ENCODE measurements at regions of chr10 and their contacts with region 1.

Region 1: DNA sequence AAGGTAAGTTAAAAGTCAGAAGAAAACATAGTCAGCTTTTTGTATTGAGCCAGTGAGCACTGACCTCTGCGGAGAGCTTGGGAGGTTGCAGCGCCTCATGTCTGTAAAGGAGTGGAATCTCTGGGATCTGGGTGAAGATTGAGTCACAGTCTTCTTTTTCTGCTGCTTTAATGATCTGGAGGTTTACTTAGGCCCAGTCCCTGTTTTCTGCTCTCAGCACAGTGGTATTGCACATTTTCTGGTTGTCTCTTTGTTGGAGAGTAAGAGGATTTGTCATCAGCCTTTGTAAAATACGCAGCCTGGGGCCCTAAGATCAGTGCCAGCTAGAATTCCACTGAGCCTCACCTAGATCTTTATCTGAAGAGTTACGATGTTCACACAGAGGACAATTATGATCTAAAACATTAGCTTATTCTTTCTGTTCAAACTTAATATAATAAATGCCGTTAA is 58.3 kb upstream of the GJD4 start:
- DNase-seq: peak; percentile 100
- ATAC-seq: peak; percentile 93
- H3K4me3 ChIP-seq: peak overlapping the region; percentile 31
- H3K27ac ChIP-seq: peak overlapping the region; percentile 86
- H3K4me1 ChIP-seq: peaks cover 42% of the 10 kb centered on the region
- H3K27me3 ChIP-seq: no peaks in the 10 kb centered on the region
- CTCF ChIP-seq: peak; percentile 78

Region 2: GRCh38 chr10:35372329-35372728 is 174.5 kb before region 1 on chr10:
- CTCF ChIA-PET with region 1: no interaction called
- POLR2A ChIA-PET with region 1: no interaction called
- intact Hi-C with region 1: loop called (anchors 1 kb)
- DNase-seq: peak; percentile 100
- ATAC-seq: peak; percentile 99
- H3K4me3 ChIP-seq: peak overlapping the region; percentile 8; the same call in 1 of the 2 replicates
- H3K27ac ChIP-seq: peak overlapping the region; percentile 76
- H3K4me1 ChIP-seq: peaks cover 31% of the 10 kb centered on the region
- H3K27me3 ChIP-seq: no peaks in the 10 kb centered on the region
- CTCF ChIP-seq: no peak

Region 3: GRCh38 chr10:35421553-35422178 is 125.2 kb before region 1 on chr10:
- CTCF ChIA-PET with region 1: interaction called, 3 read pairs
- POLR2A ChIA-PET with region 1: interaction called, 5 read pairs
- intact Hi-C with region 1: loop called (anchors 1 kb)
- DNase-seq: peak; percentile 99
- ATAC-seq: peak; percentile 90
- H3K4me3 ChIP-seq: peak overlapping the region; percentile 37; the same call in 1 of the 2 replicates
- H3K27ac ChIP-seq: peak overlapping the region; percentile 62
- H3K4me1 ChIP-seq: peaks cover 63% of the 10 kb centered on the region
- H3K27me3 ChIP-seq: no peaks in the 10 kb centered on the region
- CTCF ChIP-seq: no peak

Region 4: DNA sequence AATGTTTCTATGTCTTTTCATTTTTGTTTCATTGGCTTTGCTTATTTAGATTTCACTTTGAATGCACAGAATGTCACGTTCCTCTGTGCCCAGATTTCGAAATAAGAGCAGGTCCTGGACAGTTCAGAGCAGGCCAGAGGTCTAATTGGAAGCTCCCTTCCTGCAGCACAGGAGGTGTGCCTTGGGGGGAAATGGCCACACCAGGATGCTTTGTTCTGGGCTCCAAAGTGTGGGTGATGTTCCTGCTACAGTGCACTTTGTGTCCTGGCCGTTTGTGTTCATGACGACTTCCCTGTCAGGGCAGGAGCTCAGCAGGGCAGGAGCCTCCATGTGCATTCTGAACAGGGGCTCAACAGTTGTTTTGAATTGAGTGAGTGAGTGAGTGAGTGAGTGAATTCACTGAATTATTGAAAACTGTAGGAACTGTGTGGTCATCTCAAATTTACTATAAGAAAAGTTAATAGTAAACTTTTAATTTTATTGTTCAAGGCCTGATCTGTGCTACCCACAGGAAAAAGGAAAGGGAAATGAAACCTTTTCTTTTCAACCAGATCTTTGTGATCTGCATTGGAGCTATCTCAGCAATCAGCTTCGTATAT is 51.2 kb before region 1 on chr10:
- CTCF ChIA-PET with region 1: no interaction called
- POLR2A ChIA-PET with region 1: no interaction called
- intact Hi-C with region 1: loop called (anchors 1 kb)
- DNase-seq: no peak
- ATAC-seq: no peak
- H3K4me3 ChIP-seq: no peak overlapping the region
- H3K27ac ChIP-seq: no peak overlapping the region
- H3K4me1 ChIP-seq: peaks cover 21% of the 10 kb centered on the region
- H3K27me3 ChIP-seq: no peaks in the 10 kb centered on the region
- CTCF ChIP-seq: no peak

Region 5: DNA sequence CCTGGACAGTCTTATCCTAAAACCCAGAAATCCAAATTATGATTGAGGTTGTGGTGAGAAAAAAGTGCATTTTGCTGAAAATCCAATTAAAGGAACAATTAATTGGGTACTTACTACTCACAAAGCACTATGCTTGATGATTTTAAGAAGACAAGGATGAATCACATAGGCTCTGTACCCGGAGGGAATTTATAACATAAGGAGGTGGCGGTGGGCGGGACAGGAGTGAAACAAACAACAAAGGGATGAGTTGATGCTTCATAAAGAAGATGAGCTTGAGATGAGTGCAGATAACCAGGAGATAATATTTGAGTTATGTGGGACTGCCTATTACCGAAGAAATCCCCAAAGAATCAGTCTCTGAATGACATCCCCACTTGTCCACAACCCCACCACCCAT is 266.4 kb after region 1 on chr10:
- CTCF ChIA-PET with region 1: no interaction called
- POLR2A ChIA-PET with region 1: no interaction called
- intact Hi-C with region 1: no loop called
- DNase-seq: no peak
- ATAC-seq: peak; percentile 54
- H3K4me3 ChIP-seq: no peak overlapping the region
- H3K27ac ChIP-seq: no peak overlapping the region
- H3K4me1 ChIP-seq: no peaks in the 10 kb centered on the region
- H3K27me3 ChIP-seq: no peaks in the 10 kb centered on the region
- CTCF ChIP-seq: no peak

Measured in PC-3 (cell line).